Heart left ventricle (tissue), 16 donors: ENCODE measurements at regions of chr1 and their contacts with region 1.

Region 1: DNA sequence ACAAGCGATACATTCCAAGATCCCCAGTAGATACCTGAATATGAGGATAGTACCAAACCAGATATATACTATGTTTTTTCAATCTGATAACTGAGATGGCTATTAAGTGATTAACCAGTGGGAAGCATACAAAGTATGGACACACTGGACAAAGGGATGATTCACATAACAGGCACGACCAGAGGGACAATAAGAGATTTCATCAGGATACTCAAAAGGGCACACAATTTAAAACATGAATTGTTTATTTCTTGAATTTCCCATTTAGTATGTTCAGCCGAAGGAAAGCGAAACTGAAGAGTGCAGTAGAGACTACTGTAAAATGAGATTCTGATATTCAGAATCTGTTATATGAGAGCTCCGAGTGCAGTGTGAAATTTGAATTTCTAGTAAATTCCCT is 10.6 kb downstream of the ZZZ3 start:
- DNase-seq: no peak
- ATAC-seq: no peak
- H3K4me3 ChIP-seq: no peak overlapping the region
- H3K27ac ChIP-seq: no peak overlapping the region
- H3K4me1 ChIP-seq: peaks cover 0 to 54% (median 33%) of the 10 kb centered on the region in 12 donors
- H3K27me3 ChIP-seq: no peaks in the 10 kb centered on the region
- CTCF ChIP-seq: no peak
- POLR2A ChIP-seq: no peak

Region 2: DNA sequence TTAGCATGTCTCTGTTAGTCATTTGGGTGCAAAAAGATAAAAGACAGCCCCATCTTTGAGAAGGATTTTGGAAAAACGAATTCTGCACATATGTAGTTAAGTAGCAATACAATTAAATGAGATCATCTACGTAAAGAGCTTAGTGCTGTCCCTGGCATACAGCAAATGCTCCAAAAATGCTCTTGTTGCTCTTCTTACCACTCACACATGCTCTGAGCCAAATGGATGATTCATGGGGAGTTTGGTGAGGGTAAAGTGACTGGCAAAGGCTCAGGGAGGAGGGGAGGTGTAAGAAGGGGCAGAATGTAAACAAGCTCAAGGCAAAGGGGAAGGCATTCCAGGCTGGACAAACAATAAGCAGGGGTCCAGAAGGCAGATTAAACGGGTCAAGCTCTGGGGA is 198.1 kb before region 1 on chr1:
- intact Hi-C with region 1: no loop called
- DNase-seq: no peak
- ATAC-seq: no peak
- H3K4me3 ChIP-seq: no peak overlapping the region
- H3K27ac ChIP-seq: no peak overlapping the region
- H3K4me1 ChIP-seq: peaks cover 0 to 5% (median 0%) of the 10 kb centered on the region in 12 donors
- H3K27me3 ChIP-seq: no peaks in the 10 kb centered on the region
- CTCF ChIP-seq: no peak
- POLR2A ChIP-seq: no peak

Region 3: GRCh38 chr1:77594366-77595112 is 77.3 kb before region 1 on chr1:
- intact Hi-C with region 1: loop called in 1 of 10 experiments (anchors 10 kb)
- DNase-seq: no peak
- ATAC-seq: peak in 1 of 4 donors; percentile 39
- H3K4me3 ChIP-seq: no peak overlapping the region
- H3K27ac ChIP-seq: no peak overlapping the region
- H3K4me1 ChIP-seq: peaks cover 0 to 31% (median 0%) of the 10 kb centered on the region in 12 donors
- H3K27me3 ChIP-seq: no peaks in the 10 kb centered on the region
- CTCF ChIP-seq: no peak
- POLR2A ChIP-seq: no peak